Mucosa of descending colon (tissue), 3 donors: ENCODE measurements at regions of chr9 and their contacts with region 1.

Region 1: GRCh38 chr9:121992571-121993212 is 100.4 kb downstream of the TTLL11 start:
- DNase-seq: peak in 2 of 3 donors; percentile 38 to 74
- ATAC-seq: peak; percentile 86
- H3K4me3 ChIP-seq: no peak overlapping the region
- H3K4me1 ChIP-seq: no peaks in the 10 kb centered on the region
- CTCF ChIP-seq: peak; percentile 56

Region 2: DNA sequence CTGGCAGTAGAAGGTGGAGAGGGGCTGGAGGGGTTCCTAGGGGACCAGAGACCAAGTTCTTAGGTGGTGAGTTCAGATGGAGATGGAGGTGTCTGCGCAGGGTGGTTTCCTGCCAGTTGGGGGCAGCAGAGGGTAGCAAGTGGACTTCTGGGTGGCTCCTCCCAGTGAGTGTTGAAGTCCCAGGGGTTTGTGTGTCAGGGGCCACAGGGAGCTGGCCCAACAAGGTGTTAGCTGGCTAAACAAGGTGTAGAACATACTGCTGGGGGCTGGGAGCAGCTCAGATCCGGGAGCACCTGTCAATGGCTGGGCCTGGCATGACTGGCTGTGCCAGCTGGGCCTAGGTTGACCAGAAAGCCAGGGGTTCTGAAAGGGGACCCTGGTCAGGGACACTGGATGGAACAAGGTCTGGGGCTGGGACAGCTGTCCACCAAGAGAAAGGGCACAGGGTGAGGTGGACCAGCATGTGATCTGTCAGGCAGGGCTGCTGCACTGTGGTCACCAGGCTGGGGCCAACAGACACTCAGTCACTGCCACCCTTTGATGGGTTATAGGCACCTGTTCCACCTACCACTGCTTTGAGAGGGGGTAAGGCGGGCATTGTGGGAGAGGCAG is 305.7 kb before region 1 on chr9:
- intact Hi-C with region 1: loop called in 1 of 2 experiments (anchors 10 kb)
- DNase-seq: peak; percentile 70 to 94 (median 90)
- ATAC-seq: peak; percentile 86
- H3K4me3 ChIP-seq: no peak overlapping the region
- H3K4me1 ChIP-seq: peaks cover 19% of the 10 kb centered on the region
- CTCF ChIP-seq: peak; percentile 77

Region 3: DNA sequence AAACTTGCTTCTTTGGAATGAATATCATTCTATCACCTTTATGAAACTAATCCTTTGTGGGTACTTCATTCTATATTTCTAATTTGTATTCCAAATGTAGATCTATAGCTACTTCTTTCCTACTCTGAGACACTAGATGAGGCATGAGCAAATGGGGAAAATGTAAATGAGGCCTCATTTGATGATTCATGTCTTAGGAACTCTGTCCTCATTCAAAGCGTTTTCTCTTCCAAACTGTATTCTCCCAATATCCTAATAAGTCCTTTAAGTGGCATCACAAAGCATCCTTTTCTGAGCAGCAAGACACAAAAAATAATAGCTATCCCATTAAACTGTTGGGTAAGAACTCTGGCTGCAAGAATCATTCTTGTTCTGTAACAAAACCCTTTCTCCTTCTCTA is 44.3 kb after region 1 on chr9:
- intact Hi-C with region 1: no loop called
- DNase-seq: no peak
- ATAC-seq: no peak
- H3K4me3 ChIP-seq: no peak overlapping the region
- H3K4me1 ChIP-seq: no peaks in the 10 kb centered on the region
- CTCF ChIP-seq: no peak